ENCODE measurements at regions of chr6 and their contacts with region 1.

Region 1: DNA sequence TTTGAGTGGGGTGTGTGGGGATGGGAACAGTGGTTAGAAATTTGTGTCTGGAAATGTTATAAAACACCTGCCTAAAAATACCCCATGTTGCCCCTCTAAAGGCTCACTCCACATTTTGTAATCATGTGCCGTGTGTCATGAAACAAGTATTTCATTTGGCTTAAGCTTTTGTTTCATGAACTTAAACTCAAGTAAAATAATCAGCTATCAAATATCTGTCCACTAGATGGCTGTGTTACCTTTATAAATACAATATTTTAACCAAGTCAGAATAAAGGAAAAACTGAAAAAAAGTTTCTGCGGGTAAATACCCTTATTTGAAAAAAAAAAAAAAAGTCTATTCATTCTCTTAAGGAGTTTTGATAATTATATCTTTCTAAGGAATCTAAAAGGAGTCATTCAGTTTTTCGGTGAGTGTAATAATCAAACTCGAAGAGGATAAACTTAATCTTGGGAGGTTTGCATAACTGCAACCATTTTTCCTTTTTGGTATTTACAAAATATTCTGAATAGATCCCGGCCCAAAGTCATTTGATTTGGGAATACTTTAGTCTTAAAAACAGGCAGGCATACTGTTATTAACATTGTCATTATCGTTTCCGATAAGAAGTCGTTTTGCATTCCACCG is 29.9 kb upstream of the MTRF1L start:
- DNase-seq: peak; percentile 69
- ATAC-seq: peak; percentile 14
- H3K4me3 ChIP-seq: no peak overlapping the region
- H3K27ac ChIP-seq: peak overlapping the region; percentile 90
- H3K4me1 ChIP-seq: peaks cover 24% of the 10 kb centered on the region
- H3K27me3 ChIP-seq: no peaks in the 10 kb centered on the region
- CTCF ChIP-seq: peak; percentile 63

Region 2: DNA sequence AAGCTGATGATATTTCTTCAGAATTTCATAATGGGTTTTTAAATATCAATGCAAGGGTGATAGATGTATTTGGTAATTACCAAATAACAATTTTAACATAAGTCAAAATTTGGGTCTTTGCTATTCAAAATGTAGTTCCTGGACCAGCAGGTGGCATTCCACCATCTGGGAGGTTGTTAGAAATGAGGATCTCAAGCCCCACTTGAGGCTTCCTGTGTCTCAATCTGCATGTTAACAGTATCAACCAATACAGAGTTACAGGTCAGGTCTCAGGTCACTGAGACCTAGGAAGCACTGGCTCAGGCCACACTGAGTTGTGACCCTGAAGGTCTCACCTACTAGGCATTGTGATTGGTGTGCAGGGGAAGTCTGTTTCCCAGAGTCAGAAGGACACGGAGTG is 27.4 kb after region 1 on chr6:
- CTCF ChIA-PET with region 1: no interaction called
- POLR2A ChIA-PET with region 1: no interaction called
- intact Hi-C with region 1: loop called (anchors 2 kb)
- DNase-seq: no peak
- ATAC-seq: no peak
- H3K4me3 ChIP-seq: no peak overlapping the region
- H3K27ac ChIP-seq: peak overlapping the region; percentile 67; the same call in 1 of the 2 replicates
- H3K4me1 ChIP-seq: peaks cover 31% of the 10 kb centered on the region
- H3K27me3 ChIP-seq: no peaks in the 10 kb centered on the region
- CTCF ChIP-seq: peak; percentile 38; the same call in 1 of the 2 replicates

Region 3: GRCh38 chr6:153167061-153167891 is 134.9 kb after region 1 on chr6:
- CTCF ChIA-PET with region 1: no interaction called
- POLR2A ChIA-PET with region 1: no interaction called
- intact Hi-C with region 1: loop called (anchors 1 kb)
- DNase-seq: peak; percentile 83
- ATAC-seq: peak; percentile 82
- H3K4me3 ChIP-seq: peak overlapping the region; percentile 41; the same call in 1 of the 2 replicates
- H3K27ac ChIP-seq: peak overlapping the region; percentile 93
- H3K4me1 ChIP-seq: peaks cover 33% of the 10 kb centered on the region
- H3K27me3 ChIP-seq: no peaks in the 10 kb centered on the region
- CTCF ChIP-seq: no peak

Region 4: DNA sequence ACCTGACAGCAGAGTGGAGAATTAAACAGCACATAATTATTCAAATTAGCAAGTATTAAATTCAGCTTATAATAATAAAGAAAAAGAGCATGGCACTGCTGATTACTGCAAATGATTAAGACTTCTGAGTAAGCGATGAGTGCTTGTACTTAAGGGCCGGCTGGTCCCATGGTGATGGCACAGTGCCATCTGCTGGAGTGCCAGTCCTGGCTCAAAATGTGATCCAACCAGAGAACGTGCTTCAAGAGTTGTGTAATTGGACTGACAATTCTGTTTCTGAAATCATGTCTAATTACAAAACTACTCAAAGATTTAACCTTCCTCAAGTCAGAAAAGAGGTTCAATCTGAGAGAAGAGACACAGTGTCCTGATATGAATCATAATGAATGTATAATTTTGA is 280.3 kb after region 1 on chr6:
- CTCF ChIA-PET with region 1: interaction called, 9 read pairs
- POLR2A ChIA-PET with region 1: no interaction called
- intact Hi-C with region 1: loop called (anchors 1 kb)
- DNase-seq: peak; percentile 69
- ATAC-seq: peak; percentile 65
- H3K4me3 ChIP-seq: no peak overlapping the region
- H3K27ac ChIP-seq: no peak overlapping the region
- H3K4me1 ChIP-seq: no peaks in the 10 kb centered on the region
- H3K27me3 ChIP-seq: peaks cover 28% of the 10 kb centered on the region
- CTCF ChIP-seq: peak; percentile 63

Measured in PC-3 (cell line).